Posterior cingulate gyrus (tissue), 11 donors: ENCODE measurements at regions of chr7 and their contacts with region 1.

Region 1: DNA sequence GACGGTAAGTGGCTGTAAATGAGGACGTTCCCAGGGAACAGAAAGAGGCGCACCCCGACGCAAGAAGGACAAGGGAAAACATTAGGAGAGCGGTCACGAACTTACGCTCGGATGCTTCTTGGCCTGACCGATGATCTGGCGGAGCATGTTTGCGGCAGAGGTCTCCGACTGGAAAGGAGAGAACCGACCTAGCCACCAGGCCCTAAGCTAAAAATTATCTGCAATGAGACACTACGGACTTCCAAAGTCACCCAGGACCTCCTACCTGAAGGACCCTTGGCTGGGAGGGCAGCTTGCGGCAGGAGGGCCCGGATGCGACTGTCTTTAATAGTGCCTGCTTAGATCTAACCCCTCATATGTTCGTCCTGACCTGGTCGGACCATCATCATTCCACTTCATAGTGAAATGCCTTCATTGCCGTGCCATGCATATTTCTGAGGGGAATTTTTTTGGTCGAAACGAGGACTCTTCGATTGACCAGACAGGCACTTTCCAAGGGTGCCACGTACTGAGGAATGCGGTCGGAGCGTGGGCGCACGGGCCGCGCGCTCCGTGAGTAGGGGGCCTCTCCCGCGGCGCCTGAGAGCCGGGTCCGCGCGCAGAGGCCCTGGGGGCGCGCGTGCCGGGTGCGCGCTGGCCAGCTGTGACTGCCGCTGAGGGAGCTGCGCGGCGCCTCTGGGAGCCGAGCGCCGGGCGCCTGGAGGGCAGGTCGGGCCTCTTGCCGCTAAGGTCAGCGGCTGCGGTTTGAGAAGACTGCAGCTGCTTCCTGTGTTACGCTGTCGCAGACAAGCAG is 33.6 kb upstream of the PHF14 start:
- DNase-seq: peak; percentile 73 to 98 (median 82)

Region 2: DNA sequence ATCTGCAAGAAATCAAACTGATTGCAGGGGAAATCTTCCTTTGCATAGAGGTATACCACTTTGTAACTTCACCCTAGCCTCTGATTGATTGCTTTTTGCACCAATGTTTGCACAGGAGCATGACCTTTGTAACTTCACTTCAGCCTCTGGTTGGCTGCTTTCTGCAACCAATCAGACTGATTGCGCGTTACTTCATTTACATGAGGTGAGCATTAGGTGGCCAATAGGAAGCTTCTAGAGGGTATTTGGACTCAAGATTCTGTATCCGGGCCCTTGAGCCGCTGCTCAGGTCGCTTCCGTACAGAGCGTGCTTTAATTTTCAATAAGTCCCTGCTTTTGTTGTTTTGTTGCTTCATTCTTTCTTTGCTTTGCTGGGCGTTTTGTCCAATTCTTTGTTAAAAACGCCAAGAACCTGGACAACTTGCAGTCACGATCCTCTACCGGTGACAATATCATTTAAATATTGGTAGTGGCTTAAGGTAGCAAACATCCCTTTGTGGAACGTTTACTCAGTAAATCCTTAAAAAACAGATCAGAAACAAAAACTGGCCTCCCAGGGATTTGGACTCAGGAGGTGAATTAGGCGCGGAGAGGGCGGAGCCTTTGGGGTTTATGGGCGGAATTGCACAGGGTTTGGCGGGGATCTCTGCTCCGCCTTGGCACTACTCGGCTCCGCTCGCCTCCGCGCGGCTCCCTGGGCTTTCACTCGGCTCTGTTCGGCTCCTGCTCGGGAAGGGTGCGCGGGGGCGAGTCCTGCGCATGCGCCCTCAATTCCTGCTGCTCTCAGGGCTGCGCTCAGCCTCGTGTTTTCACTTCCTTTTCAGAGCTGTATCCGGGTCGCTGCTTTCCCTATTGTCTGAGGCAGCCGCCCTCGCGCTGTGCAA is 33.2 kb after region 1 on chr7 and contains the start of gene PHF14:
- intact Hi-C with region 1: loop called (anchors 1 kb)
- DNase-seq: peak; percentile 93 to 99 (median 95)

Region 3: GRCh38 chr7:11212080-11212711 is 272.1 kb after region 1 on chr7:
- intact Hi-C with region 1: loop called (anchors 10 kb)
- DNase-seq: peak in 5 of 10 donors; percentile 36 to 63 (median 57)